SK-N-SH (cell line): ENCODE measurements at regions of chr6 and their contacts with region 1.

Region 1: DNA sequence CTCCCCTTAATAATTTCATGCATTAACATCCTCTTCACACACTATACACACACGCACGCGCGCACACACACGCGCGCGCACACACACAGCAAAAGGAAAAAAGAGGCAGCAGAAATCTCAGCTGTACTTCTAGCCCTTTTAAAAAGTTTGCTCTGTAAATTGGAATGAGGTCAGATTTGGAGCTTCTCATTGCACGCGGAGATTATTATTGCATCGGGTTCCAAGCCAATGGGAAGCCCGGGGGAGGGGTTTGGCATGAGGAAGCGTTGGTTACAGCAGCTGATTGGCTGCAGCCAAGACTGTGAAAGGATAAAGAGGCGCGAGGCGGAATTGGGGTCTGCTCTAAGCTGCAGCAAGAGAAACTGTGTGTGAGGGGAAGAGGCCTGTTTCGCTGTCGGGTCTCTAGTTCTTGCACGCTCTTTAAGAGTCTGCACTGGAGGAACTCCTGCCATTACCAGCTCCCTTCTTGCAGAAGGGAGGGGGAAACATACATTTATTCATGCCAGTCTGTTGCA is at the start of gene SOX4:
- DNase-seq: peak; percentile 93
- H3K4me3 ChIP-seq: peak within 1 kb of the TSS; percentile 81 to 95
- H3K27ac ChIP-seq: peak within 1 kb of the TSS; percentile 88 to 98
- H3K4me1 ChIP-seq: peaks cover 6 to 8% of the 10 kb centered on the region in 2 experiments; a peak in 3 of 4 replicates
- H3K27me3 ChIP-seq: no peaks in the 10 kb centered on the region
- CTCF ChIP-seq: no peak
- EP300 ChIP-seq: peak; percentile 36 to 70; a peak in 3 of 4 replicates
- RAD21 ChIP-seq: peak; percentile 34; the same call in 1 of the 2 replicates
- polyA plus RNA-seq, gene SOX4: 5.5 and 5.8 TPM in 2 replicates

Region 2: GRCh38 chr6:20572940-20573339 is 1020.5 kb before region 1 on chr6:
- CTCF ChIA-PET with region 1: interaction called, 7 read pairs
- POLR2A ChIA-PET with region 1: interaction called, 16 read pairs
- DNase-seq: no peak
- H3K4me3 ChIP-seq: no peak overlapping the region
- H3K27ac ChIP-seq: peak overlapping the region in 1 of 2 experiments; percentile 99; a peak in 2 of 4 replicates
- H3K4me1 ChIP-seq: peaks cover 12 to 40% of the 10 kb centered on the region in 2 experiments; a peak in 3 of 4 replicates
- H3K27me3 ChIP-seq: no peaks in the 10 kb centered on the region
- CTCF ChIP-seq: no peak
- EP300 ChIP-seq: peak in 1 of 2 experiments; percentile 22; a peak in 1 of 4 replicates
- RAD21 ChIP-seq: no peak; the same call in 1 of the 2 replicates

Region 3: GRCh38 chr6:20877008-20877937 is 716.2 kb before region 1 on chr6:
- CTCF ChIA-PET with region 1: interaction called, 41 read pairs
- POLR2A ChIA-PET with region 1: interaction called, 14 read pairs
- DNase-seq: no peak
- H3K4me3 ChIP-seq: no peak overlapping the region
- H3K27ac ChIP-seq: peak overlapping the region; percentile 44 to 88
- H3K4me1 ChIP-seq: peaks cover 20 to 29% of the 10 kb centered on the region in 2 experiments; a peak in 3 of 4 replicates
- H3K27me3 ChIP-seq: no peaks in the 10 kb centered on the region
- CTCF ChIP-seq: no peak
- EP300 ChIP-seq: peak in 1 of 2 experiments; percentile 66; a peak in 1 of 4 replicates
- RAD21 ChIP-seq: no peak

Region 4: GRCh38 chr6:21240709-21241108 is 352.8 kb before region 1 on chr6:
- CTCF ChIA-PET with region 1: interaction called, 14 read pairs
- POLR2A ChIA-PET with region 1: interaction called, 23 read pairs
- DNase-seq: no peak
- H3K4me3 ChIP-seq: no peak overlapping the region
- H3K27ac ChIP-seq: peak overlapping the region in 1 of 2 experiments; percentile 99; a peak in 2 of 4 replicates
- H3K4me1 ChIP-seq: peaks cover 0 to 20% of the 10 kb centered on the region in 2 experiments; a peak in 2 of 4 replicates
- H3K27me3 ChIP-seq: no peaks in the 10 kb centered on the region
- CTCF ChIP-seq: no peak
- EP300 ChIP-seq: no peak
- RAD21 ChIP-seq: no peak

Region 5: DNA sequence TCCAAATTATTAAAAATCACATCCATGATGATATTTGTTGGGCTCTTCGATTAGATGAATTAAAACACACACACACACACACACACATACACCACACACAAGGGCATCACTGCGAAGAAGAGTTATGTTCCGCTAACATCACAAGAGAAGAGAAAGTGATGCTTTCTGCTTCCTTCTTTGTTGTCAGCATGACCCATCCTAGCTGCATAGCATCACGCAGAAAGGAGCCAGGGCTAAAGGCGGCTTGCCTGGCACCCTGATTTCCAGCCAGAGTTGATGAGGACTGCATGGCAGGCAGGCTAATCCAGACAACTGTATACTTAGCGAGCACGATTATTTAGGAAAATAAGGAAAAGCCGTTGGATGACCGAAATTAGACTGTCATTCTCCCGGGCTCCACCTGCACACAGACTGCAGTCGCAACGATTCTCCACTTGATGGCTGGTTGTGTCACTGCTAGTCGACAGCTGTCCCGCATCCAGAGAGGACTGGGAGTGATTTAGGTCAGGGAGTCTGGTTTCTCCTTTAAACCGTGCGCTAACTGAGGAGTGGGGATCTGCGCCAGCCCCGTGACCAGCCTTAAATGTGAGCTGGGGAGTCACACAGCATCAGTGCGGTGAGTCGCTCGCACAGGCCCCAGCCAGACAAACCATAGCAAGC is 70.5 kb before region 1 on chr6:
- CTCF ChIA-PET with region 1: interaction called, 17 read pairs
- POLR2A ChIA-PET with region 1: interaction called, 50 read pairs
- DNase-seq: peak; percentile 64
- H3K4me3 ChIP-seq: peak overlapping the region; percentile 33 to 53
- H3K27ac ChIP-seq: peak overlapping the region in 1 of 2 experiments; percentile 96; a peak in 2 of 4 replicates
- H3K4me1 ChIP-seq: peaks cover 0 to 19% of the 10 kb centered on the region in 2 experiments; a peak in 2 of 4 replicates
- H3K27me3 ChIP-seq: no peaks in the 10 kb centered on the region; the same call in 1 of the 2 replicates
- CTCF ChIP-seq: peak; percentile 37; the same call in 1 of the 2 replicates
- EP300 ChIP-seq: 0 out of 4 replicates have a peak, but pooled peaks of 1 of the 2 experiments have one; percentile 10
- RAD21 ChIP-seq: peak; percentile 47

Region 6: DNA sequence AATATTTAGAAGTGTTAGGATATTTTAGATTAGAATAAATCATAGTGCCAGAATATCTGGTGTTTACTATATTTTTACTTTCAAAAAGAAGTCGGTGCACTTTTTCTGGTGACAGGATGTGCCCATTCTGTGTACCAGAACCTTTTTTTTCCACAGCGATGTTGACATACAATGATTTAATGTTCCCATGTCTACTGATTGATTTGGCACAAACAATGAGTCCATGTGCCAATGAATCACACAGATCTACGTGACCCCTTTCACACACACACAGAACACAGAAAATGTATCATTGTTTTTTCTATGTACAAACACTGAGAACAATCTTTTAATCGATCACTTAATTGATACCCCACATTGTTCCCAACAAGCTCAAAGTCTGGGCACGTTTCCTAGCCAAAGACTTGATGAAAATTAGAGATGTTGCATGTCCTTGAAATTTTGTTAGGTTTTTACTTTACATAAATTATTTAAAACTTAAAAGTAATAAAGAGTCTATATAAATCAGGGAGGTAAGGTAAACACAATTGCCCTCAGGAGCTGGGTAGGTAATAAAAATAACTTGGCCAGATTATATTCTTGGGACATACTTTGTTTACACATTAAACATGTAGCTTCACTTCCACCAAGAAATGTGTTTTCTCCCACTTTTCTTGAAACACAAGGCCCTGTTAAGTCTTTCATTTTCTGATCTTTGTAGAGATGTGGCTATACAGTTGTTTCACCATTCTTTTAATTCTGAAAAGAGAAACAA is 36.3 kb before region 1 on chr6:
- CTCF ChIA-PET with region 1: no interaction called
- POLR2A ChIA-PET with region 1: no interaction called
- DNase-seq: no peak
- H3K4me3 ChIP-seq: no peak overlapping the region
- H3K27ac ChIP-seq: no peak overlapping the region
- H3K4me1 ChIP-seq: no peaks in the 10 kb centered on the region
- H3K27me3 ChIP-seq: no peaks in the 10 kb centered on the region
- CTCF ChIP-seq: no peak
- EP300 ChIP-seq: no peak
- RAD21 ChIP-seq: no peak

Region 7: DNA sequence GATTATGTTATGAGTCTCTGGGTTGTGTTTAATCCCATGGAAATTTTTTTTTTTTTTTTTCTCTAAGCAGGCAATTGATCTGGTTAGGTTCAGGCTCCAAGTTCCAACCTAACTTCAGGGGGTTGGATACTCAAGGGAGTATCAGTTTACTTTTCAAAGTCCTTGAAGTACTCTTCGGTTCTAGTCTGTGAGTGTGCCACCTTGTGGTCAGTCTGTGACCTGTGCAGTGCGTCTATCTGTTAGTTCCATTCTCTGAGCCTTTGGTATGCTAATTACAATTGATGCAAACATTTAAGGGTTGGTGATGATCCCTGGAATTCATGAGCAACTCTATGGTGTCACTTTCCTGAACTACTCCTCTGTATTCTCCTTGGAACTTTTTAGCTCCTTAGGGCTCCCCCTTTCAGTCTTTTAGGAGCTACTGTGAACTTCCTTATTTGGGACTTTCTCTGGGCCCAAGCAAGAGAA is 342.1 kb after region 1 on chr6:
- CTCF ChIA-PET with region 1: no interaction called
- POLR2A ChIA-PET with region 1: no interaction called
- DNase-seq: no peak
- H3K4me3 ChIP-seq: no peak overlapping the region; a peak in 1 of 4 replicates
- H3K27ac ChIP-seq: no peak overlapping the region
- H3K4me1 ChIP-seq: no peaks in the 10 kb centered on the region
- H3K27me3 ChIP-seq: no peaks in the 10 kb centered on the region
- CTCF ChIP-seq: peak; percentile 63
- EP300 ChIP-seq: no peak
- RAD21 ChIP-seq: peak; percentile 33; the same call in 1 of the 2 replicates

Region 8: GRCh38 chr6:22145823-22146677 is 552.6 kb after region 1 on chr6:
- CTCF ChIA-PET with region 1: interaction called, 64 read pairs
- POLR2A ChIA-PET with region 1: interaction called, 173 read pairs
- DNase-seq: peak; percentile 75
- H3K4me3 ChIP-seq: peak overlapping the region; percentile 61 to 75
- H3K27ac ChIP-seq: peak overlapping the region; percentile 61 to 99
- H3K4me1 ChIP-seq: peaks cover 16 to 41% of the 10 kb centered on the region in 2 experiments; a peak in 3 of 4 replicates
- H3K27me3 ChIP-seq: no peaks in the 10 kb centered on the region
- CTCF ChIP-seq: peak; percentile 55
- EP300 ChIP-seq: peak in 1 of 2 experiments; percentile 45; a peak in 1 of 4 replicates
- RAD21 ChIP-seq: peak; percentile 76

Region 9: DNA sequence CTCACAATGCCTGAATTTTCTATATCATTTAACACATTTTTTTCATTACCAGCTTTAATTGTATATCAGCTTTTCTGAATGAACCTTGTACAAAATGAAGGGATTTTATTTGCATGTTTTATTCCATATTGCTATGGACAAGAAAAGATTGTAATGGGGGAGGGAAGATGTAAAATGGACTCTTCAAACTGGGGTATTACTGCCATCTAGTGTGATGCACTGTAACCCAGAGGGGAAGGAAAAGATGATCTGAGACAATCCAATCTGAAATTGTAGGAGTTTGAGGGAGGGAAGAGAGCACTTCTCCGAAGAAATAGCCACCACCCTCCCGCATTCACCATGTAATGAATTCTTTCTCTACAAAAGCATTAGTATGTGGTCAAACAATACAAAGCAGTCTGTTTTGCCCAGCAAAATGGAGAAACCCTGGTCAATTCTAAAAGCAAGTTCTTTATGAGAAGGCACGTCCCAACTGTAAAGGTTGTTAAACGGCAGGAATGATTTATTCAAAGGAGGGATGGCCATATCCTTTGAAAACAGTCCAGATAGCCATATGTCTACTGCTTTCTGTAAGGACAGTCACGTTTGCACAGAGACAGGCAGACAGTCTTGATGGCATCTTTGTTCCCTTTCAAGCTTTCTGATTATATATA is 1853.1 kb after region 1 on chr6:
- CTCF ChIA-PET with region 1: interaction called, 5 read pairs
- POLR2A ChIA-PET with region 1: interaction called, 13 read pairs
- DNase-seq: peak; percentile 42
- H3K4me3 ChIP-seq: peak overlapping the region in 1 of 2 experiments; percentile 37; a peak in 1 of 4 replicates
- H3K27ac ChIP-seq: peak overlapping the region in 1 of 2 experiments; percentile 98; a peak in 3 of 4 replicates
- H3K4me1 ChIP-seq: peaks cover 8 to 37% of the 10 kb centered on the region in 2 experiments; a peak in 3 of 4 replicates
- H3K27me3 ChIP-seq: no peaks in the 10 kb centered on the region
- CTCF ChIP-seq: peak; percentile 73
- EP300 ChIP-seq: peak in 1 of 2 experiments; percentile 70; a peak in 2 of 4 replicates
- RAD21 ChIP-seq: peak; percentile 96